Activated B cell treated with CpG ODN at 0.5 μM for 24 hours (primary cell): ENCODE measurements at regions of chr6 and their contacts with region 1.

Region 1: DNA sequence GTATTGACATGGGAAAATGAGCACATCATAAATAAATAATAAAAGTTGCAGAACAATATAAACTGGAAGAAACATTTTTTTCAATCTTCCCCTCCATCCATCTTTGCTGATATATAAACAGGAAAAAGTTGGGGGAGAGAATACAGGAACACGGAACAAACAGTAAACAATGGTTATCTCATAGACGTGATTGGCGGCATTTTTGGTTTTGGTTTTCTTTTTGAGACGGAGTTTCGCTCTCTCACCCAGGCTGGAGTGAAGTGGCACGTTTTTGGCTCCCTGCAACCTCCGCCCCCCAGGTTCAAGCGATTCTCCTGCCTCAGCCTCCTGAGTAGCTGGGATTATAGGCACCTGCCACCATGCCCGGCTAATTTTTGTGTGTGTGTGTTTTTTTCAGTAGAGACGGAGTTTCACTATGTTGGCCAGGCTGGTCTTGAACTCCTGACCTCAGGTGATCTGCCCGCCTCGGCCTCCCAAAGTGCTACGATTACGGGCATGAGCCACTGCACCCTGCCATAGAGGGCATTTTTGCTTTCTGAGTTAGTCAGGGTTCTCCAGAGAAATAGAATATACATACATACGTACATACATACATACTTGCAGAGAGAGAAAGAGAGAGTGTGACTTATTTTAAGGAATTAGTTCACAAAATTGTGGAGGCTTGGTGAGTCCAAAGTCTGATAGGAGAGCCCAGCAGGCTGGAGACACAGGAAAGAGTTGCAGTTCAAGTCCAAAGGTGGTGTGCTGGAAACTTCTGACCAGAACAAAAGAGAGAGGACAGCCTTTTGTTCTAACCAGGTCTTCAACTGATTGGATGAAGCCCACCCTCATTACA is 22.6 kb downstream of the GNL1 start:
- DNase-seq: no peak
- ATAC-seq: no peak
- H3K4me3 Mint-ChIP-seq: no peak overlapping the region
- H3K27ac Mint-ChIP-seq: peak overlapping the region; percentile 85
- H3K4me1 Mint-ChIP-seq: peaks cover 45% of the 10 kb centered on the region
- H3K27me3 Mint-ChIP-seq: no peaks in the 10 kb centered on the region
- CTCF ChIP-seq: no peak

Region 2: DNA sequence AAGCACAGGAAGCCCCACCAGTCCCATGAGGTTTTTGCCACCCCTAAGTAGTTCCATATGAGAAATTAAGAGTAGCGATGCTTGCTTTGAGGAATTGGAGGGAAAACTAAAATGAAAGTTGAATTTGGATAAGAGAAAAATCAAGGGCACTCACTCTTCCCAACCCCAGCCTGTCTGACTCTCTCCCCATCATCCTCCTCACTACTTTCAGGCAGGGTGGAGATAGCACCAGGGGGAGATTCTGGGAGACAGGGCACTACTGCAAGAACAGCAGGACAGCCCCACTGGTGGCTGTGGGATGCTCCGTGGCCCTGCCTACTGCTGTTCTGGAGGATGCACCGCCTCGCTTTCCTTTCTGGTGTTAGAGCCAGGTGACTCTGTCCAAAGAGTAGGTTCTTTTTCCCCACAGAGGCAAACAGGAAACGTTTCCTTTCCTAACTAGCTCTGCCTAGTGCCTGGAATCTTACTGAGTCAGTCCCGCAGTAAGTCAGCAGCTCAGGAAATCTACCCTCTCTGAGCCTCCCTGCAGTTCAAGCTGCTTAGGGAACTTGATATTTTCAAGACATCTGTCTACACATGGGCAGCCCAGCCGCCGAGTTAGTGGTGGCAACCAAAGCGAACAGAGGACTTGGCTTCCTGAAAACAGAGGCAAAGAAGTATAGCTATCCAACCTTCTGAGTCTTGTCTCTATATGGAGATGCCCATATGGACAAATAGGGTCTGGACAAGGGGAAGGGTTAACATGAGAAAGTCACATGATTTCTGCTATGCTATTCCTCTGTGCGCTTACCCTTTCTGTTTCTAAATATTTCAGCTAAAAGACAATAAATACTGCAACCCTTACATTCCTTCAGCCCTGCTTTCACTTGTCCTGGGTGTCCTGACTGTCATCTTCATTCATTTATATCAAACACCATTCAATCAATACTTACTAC is 33.0 kb before region 1 on chr6:
- CTCF ChIA-PET with region 1: interaction called, 21 read pairs
- POLR2A ChIA-PET with region 1: interaction called, 458 read pairs
- intact Hi-C with region 1: no loop called
- DNase-seq: no peak
- ATAC-seq: peak; percentile 61
- H3K4me3 Mint-ChIP-seq: peak overlapping the region; percentile 74
- H3K27ac Mint-ChIP-seq: peak overlapping the region; percentile 79
- H3K4me1 Mint-ChIP-seq: peaks cover 49% of the 10 kb centered on the region
- H3K27me3 Mint-ChIP-seq: no peaks in the 10 kb centered on the region
- CTCF ChIP-seq: no peak

Region 3: DNA sequence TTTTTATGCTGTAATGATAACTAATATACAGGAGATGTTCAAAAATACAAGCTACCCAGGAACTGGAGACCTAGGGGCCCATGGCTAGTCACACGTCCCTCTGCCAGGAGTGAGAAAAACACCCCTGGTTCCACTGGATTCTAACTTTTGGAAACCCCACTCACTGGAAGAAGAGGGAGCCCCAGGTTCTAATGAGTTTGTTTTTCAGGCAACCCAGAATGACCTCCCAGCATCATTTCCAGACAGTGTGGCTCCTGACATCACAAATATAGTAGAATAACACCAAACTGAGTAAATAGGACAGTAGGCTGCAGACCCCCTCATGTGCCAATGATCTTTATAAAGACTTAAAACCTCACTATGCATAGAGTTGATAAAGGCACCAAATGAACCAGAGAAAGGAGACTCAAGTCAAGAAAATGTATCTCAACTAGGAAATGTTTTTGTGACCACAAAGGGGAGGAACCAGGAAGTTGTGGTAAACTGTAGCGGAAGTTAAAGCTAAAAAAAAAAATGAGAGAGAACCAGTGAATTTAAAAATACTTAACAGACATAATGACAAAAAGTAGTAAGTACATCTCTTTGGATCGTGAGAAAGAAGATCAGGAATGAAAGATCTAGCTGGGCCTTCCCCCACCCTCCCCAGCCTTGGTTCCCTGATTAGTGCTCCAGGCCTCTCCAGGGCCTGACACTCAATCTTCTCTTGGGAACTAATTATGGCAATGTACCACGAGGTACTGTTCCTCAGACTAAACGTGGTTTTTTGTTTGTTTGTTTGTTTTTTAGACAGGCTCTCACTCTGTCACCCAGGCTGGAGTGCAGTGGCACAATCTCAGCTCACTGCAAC is 24.6 kb before region 1 on chr6:
- CTCF ChIA-PET with region 1: interaction called, 22 read pairs
- POLR2A ChIA-PET with region 1: interaction called, 352 read pairs
- intact Hi-C with region 1: loop called (anchors 1 kb)
- DNase-seq: no peak
- ATAC-seq: peak; percentile 55
- H3K4me3 Mint-ChIP-seq: peak overlapping the region; percentile 75
- H3K27ac Mint-ChIP-seq: peak overlapping the region; percentile 90
- H3K4me1 Mint-ChIP-seq: peaks cover 73% of the 10 kb centered on the region
- H3K27me3 Mint-ChIP-seq: no peaks in the 10 kb centered on the region
- CTCF ChIP-seq: no peak

Region 4: DNA sequence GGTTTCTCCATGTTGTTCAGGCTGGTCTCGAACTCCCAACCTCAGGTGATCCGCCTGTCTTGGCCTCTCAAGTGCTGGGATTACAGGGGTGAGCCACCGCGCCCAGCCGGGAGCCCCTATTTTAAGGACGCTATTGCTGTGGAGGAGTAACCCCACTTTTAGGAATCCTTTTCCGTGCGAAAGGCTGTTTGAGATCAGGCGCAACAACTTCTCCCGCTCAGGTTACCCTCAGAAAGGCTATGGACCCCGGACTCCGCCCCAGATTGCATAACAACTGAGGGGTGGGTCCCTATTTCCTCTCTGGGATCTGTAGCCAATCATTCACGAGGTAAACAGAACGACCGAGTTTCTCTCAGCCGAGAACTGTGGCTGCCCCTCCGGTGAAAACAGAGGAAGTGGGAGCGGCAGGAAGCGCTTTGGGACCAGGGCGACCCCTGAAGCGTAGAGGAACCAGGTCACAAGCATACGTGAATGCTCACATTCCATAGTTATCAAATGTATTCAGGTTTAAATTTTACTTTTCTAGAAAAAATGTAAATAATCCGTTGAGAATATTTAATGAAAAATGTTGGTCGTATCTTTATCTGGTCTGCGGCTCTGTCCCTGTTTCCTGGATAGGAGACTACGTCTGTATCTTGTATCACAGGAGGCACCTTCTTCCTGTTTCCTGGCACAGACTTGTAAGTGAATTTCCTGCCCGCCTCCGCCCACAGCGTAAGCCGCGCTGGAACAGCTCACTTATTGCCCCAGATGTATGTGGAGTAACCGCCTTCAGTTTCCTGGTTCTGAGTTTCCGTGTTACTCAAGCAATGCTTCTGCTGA is 17.5 kb before region 1 on chr6:
- CTCF ChIA-PET with region 1: interaction called, 10 read pairs
- POLR2A ChIA-PET with region 1: interaction called, 352 read pairs
- intact Hi-C with region 1: loop called (anchors 1 kb)
- DNase-seq: peak; percentile 69
- ATAC-seq: peak; percentile 82
- H3K4me3 Mint-ChIP-seq: peak overlapping the region; percentile 87
- H3K27ac Mint-ChIP-seq: peak overlapping the region; percentile 97
- H3K4me1 Mint-ChIP-seq: peaks cover 71% of the 10 kb centered on the region
- H3K27me3 Mint-ChIP-seq: no peaks in the 10 kb centered on the region
- CTCF ChIP-seq: no peak

Region 5: GRCh38 chr6:30686908-30687658 is 153.4 kb after region 1 on chr6:
- CTCF ChIA-PET with region 1: no interaction called
- POLR2A ChIA-PET with region 1: no interaction called
- intact Hi-C with region 1: no loop called
- DNase-seq: peak; percentile 82
- ATAC-seq: peak; percentile 56
- H3K4me3 Mint-ChIP-seq: peak overlapping the region; percentile 92
- H3K27ac Mint-ChIP-seq: peak overlapping the region; percentile 99
- H3K4me1 Mint-ChIP-seq: peaks cover 78% of the 10 kb centered on the region
- H3K27me3 Mint-ChIP-seq: no peaks in the 10 kb centered on the region
- CTCF ChIP-seq: no peak

Region 6: GRCh38 chr6:31042806-31043205 is 509.1 kb after region 1 on chr6:
- CTCF ChIA-PET with region 1: no interaction called
- POLR2A ChIA-PET with region 1: no interaction called
- intact Hi-C with region 1: no loop called
- DNase-seq: no peak
- ATAC-seq: peak; percentile 40
- H3K4me3 Mint-ChIP-seq: peak overlapping the region; percentile 81
- H3K27ac Mint-ChIP-seq: peak overlapping the region; percentile 55
- H3K4me1 Mint-ChIP-seq: peaks cover 13% of the 10 kb centered on the region
- H3K27me3 Mint-ChIP-seq: peaks cover 7% of the 10 kb centered on the region
- CTCF ChIP-seq: no peak

Region 7: DNA sequence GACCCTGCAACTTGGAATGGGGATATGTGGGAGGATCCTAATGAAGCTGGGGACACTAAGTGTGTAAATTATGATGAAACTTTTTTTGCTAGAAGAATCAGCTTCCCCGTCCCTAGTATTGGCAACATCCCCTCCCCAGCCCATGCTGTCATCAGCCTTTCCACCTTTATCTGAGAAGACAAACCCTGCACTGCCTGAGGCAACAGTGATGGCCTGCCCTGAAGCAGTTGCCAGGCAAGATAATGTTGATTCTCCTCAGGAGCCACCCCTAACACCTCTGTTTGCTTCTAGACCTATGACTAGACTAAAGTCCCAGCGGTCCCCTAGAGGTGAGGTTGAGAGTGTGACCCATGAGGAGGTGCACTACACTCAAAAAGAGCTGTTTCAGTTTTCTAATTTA is 896.8 kb after region 1 on chr6:
- CTCF ChIA-PET with region 1: no interaction called
- POLR2A ChIA-PET with region 1: no interaction called
- intact Hi-C with region 1: no loop called
- DNase-seq: no peak
- ATAC-seq: no peak
- H3K4me3 Mint-ChIP-seq: no peak overlapping the region
- H3K27ac Mint-ChIP-seq: no peak overlapping the region
- H3K4me1 Mint-ChIP-seq: peaks cover under 1% of the 10 kb centered on the region
- H3K27me3 Mint-ChIP-seq: no peaks in the 10 kb centered on the region
- CTCF ChIP-seq: no peak